ENCODE measurements at regions of chr1 and their contacts with region 1.

Region 1: GRCh38 chr1:44792783-44793714 is 5.1 kb upstream of the BEST4 start:
- DNase-seq: no peak
- ATAC-seq: no peak
- H3K4me3 ChIP-seq: no peak overlapping the region
- H3K27ac ChIP-seq: no peak overlapping the region
- H3K4me1 ChIP-seq: peaks cover 16 to 20% of the 10 kb centered on the region in 2 experiments; a peak in 4 of 5 replicates
- H3K27me3 ChIP-seq: no peaks in the 10 kb centered on the region
- CTCF ChIP-seq: no peak
- EP300 ChIP-seq: no peak
- POLR2A ChIP-seq: no peak
- RAD21 ChIP-seq: no peak

Region 2: GRCh38 chr1:44830900-44831304 is 37.9 kb after region 1 on chr1:
- CTCF ChIA-PET with region 1: no interaction called
- POLR2A ChIA-PET with region 1: interaction called, 3 read pairs
- in situ Hi-C with region 1: no loop called
- intact Hi-C with region 1: loop called (anchors 5 kb)
- DNase-seq: peak; percentile 73 to 82 (median 78)
- ATAC-seq: peak; percentile 74
- H3K4me3 ChIP-seq: no peak overlapping the region
- H3K27ac ChIP-seq: peak overlapping the region; percentile 46
- H3K4me1 ChIP-seq: peaks cover 51 to 75% of the 10 kb centered on the region in 2 experiments
- H3K27me3 ChIP-seq: no peaks in the 10 kb centered on the region
- CTCF ChIP-seq: peak; percentile 47 to 58 (median 54)
- EP300 ChIP-seq: no peak
- POLR2A ChIP-seq: no peak
- RAD21 ChIP-seq: peak in 1 of 2 experiments; percentile 33; a peak in 2 of 4 replicates

Region 3: GRCh38 chr1:44919400-44919799 is 126.4 kb after region 1 on chr1:
- CTCF ChIA-PET with region 1: no interaction called
- POLR2A ChIA-PET with region 1: no interaction called
- in situ Hi-C with region 1: no loop called
- intact Hi-C with region 1: no loop called
- DNase-seq: no peak
- ATAC-seq: no peak
- H3K4me3 ChIP-seq: no peak overlapping the region
- H3K27ac ChIP-seq: no peak overlapping the region
- H3K4me1 ChIP-seq: no peaks in the 10 kb centered on the region
- H3K27me3 ChIP-seq: no peaks in the 10 kb centered on the region
- CTCF ChIP-seq: no peak
- EP300 ChIP-seq: no peak
- POLR2A ChIP-seq: no peak
- RAD21 ChIP-seq: no peak

Measured in K562 (cell line).